Esophagus squamous epithelium (tissue), 5 donors: ENCODE measurements at regions of chr19 and their contacts with region 1.

Region 1: DNA sequence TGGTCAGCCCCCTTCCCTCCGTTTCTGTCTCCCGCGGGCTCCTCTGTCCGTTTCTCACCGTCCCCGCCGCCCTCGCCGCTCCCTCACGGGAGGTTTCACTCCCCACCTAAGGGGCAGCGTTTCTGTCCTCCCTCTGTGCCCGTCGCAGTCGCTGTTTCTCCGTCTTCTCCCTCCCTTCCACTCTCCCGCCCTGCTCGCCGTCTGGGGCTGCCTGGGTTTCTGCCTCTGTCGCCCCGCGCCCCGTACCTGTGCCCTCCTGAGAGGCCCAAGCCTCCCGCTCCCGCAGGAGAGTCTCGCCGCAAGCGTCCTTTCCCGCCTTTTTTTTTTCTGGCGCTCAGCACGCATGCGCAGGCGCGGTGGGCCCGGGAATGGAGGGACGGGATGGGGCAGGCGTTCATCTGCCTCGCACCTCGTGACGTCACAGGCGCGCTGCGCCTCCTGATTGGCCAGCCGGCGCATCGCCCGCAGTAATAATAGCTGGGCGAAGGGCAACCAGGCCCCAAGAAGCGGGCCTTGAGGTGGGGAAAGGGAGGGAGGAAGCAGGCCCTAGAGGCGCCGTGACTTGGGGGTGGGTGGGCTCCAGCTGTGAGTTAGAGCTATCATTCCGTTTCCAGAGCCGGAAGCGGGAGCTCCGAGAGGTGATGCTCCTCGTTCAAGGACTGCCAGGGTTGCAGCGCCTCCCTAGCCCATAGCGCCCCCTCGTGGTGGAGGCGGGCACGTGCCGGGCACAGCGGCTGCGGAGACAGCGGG is 15.4 kb downstream of the SSC5D start:
- DNase-seq: peak; percentile 54
- H3K4me3 ChIP-seq: peak overlapping the region; percentile 28 to 59 (median 42)
- H3K27ac ChIP-seq: peak overlapping the region; percentile 58 to 81 (median 76)
- H3K4me1 ChIP-seq: peaks cover 4 to 13% (median 7%) of the 10 kb centered on the region in 3 donors
- H3K27me3 ChIP-seq: no peaks in the 10 kb centered on the region
- CTCF ChIP-seq: peak; percentile 96 to 99 (median 98)
- POLR2A ChIP-seq: no peak

Region 2: GRCh38 chr19:55136399-55137102 is 367.1 kb before region 1 on chr19:
- intact Hi-C with region 1: loop called (anchors 5 kb)
- DNase-seq: no peak
- H3K4me3 ChIP-seq: no peak overlapping the region
- H3K27ac ChIP-seq: no peak overlapping the region
- H3K4me1 ChIP-seq: peaks cover 0 to 6% (median 0%) of the 10 kb centered on the region in 3 donors
- H3K27me3 ChIP-seq: peaks cover 0 to 86% (median 0%) of the 10 kb centered on the region in 4 donors
- CTCF ChIP-seq: no peak
- POLR2A ChIP-seq: no peak

Region 3: GRCh38 chr19:55467236-55468053 is 36.2 kb before region 1 on chr19:
- intact Hi-C with region 1: loop called (anchors 5 kb)
- DNase-seq: no peak
- H3K4me3 ChIP-seq: no peak overlapping the region
- H3K27ac ChIP-seq: no peak overlapping the region
- H3K4me1 ChIP-seq: peaks cover 8 to 12% (median 9%) of the 10 kb centered on the region in 3 donors
- H3K27me3 ChIP-seq: no peaks in the 10 kb centered on the region
- CTCF ChIP-seq: peak; percentile 95 to 100 (median 96)
- POLR2A ChIP-seq: no peak

Region 4: GRCh38 chr19:55566823-55567222 is 63.1 kb after region 1 on chr19:
- intact Hi-C with region 1: no loop called
- DNase-seq: no peak
- H3K4me3 ChIP-seq: no peak overlapping the region
- H3K27ac ChIP-seq: no peak overlapping the region
- H3K4me1 ChIP-seq: peaks cover 0 to 4% (median 0%) of the 10 kb centered on the region in 3 donors
- H3K27me3 ChIP-seq: peaks cover 0 to 31% (median 0%) of the 10 kb centered on the region in 4 donors
- CTCF ChIP-seq: no peak
- POLR2A ChIP-seq: no peak

Region 5: GRCh38 chr19:55738302-55738701 is 234.6 kb after region 1 on chr19 and contains the start of gene NLRP9:
- intact Hi-C with region 1: no loop called
- DNase-seq: no peak
- H3K4me3 ChIP-seq: no peak within 1 kb of the TSS
- H3K27ac ChIP-seq: no peak within 1 kb of the TSS
- H3K4me1 ChIP-seq: no peaks in the 10 kb centered on the region
- H3K27me3 ChIP-seq: no peaks in the 10 kb centered on the region
- CTCF ChIP-seq: no peak
- POLR2A ChIP-seq: no peak
- total RNA-seq, gene NLRP9: not detected